Activated T-helper 1 cell treated with anti-CD3 and anti-CD28 coated beads, Interleukin-12 subunit alpha, Interleukin-12 subunit beta, Interleukin-2, Interleukin-4 antibody, amounts not matched to agents 30 ng/mL and 10 ng/mL and 1 ng/mL, durations not matched to agents 14 hours and 24 hours and 36 hours (primary cell): ENCODE measurements at regions of chr9 and their contacts with region 1.

Region 1: GRCh38 chr9:115204904-115205453 is 87.0 kb upstream of the TNC start:
- DNase-seq: no peak
- H3K4me3 Mint-ChIP-seq: no peak overlapping the region
- H3K27ac Mint-ChIP-seq: no peak overlapping the region
- H3K4me1 Mint-ChIP-seq: peaks cover 50% of the 10 kb centered on the region
- H3K27me3 Mint-ChIP-seq: peaks cover 13% of the 10 kb centered on the region

Region 2: GRCh38 chr9:114611516-114612271 is 593.3 kb before region 1 on chr9:
- intact Hi-C with region 1: loop called (anchors 1 kb)
- DNase-seq: no peak
- H3K4me3 Mint-ChIP-seq: peak overlapping the region; percentile 89
- H3K27ac Mint-ChIP-seq: peak overlapping the region; percentile 86
- H3K4me1 Mint-ChIP-seq: peaks cover 50% of the 10 kb centered on the region
- H3K27me3 Mint-ChIP-seq: peaks cover 2% of the 10 kb centered on the region

Region 3: DNA sequence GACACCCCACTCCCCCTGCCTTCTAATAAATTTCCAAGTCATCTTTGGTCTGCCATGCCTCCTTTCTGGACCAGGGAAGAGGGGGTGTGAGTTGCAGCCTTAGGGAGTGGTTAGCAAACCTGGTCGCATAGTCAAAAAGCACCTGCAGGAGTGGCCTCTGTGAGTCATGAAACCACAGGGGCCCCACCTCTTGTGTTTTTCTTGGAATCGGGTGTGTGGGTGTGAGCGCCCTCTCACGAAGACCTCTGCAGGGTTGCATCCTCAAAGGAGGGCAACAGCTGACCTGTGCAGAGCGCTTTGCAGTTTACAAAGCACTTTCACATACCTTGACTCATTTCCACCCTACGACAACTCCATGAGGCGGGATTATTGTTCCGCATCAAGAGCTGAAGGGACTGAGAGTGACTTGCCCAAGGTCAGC is 486.2 kb before region 1 on chr9:
- intact Hi-C with region 1: loop called (anchors 5 kb)
- DNase-seq: peak; percentile 94
- H3K4me3 Mint-ChIP-seq: peak overlapping the region; percentile 28
- H3K27ac Mint-ChIP-seq: peak overlapping the region; percentile 98
- H3K4me1 Mint-ChIP-seq: peaks cover 82% of the 10 kb centered on the region
- H3K27me3 Mint-ChIP-seq: peaks cover 2% of the 10 kb centered on the region

Region 4: GRCh38 chr9:114805670-114806525 is 399.1 kb before region 1 on chr9 and contains the start of gene TNFSF15:
- intact Hi-C with region 1: loop called (anchors 10 kb)
- DNase-seq: peak; percentile 22
- H3K4me3 Mint-ChIP-seq: peak within 1 kb of the TSS; percentile 74
- H3K27ac Mint-ChIP-seq: peak within 1 kb of the TSS; percentile 41
- H3K4me1 Mint-ChIP-seq: peaks cover 34% of the 10 kb centered on the region
- H3K27me3 Mint-ChIP-seq: no peaks in the 10 kb centered on the region
- total RNA-seq, gene TNFSF15: 1.4 and 1.5 TPM in 2 replicates

Region 5: DNA sequence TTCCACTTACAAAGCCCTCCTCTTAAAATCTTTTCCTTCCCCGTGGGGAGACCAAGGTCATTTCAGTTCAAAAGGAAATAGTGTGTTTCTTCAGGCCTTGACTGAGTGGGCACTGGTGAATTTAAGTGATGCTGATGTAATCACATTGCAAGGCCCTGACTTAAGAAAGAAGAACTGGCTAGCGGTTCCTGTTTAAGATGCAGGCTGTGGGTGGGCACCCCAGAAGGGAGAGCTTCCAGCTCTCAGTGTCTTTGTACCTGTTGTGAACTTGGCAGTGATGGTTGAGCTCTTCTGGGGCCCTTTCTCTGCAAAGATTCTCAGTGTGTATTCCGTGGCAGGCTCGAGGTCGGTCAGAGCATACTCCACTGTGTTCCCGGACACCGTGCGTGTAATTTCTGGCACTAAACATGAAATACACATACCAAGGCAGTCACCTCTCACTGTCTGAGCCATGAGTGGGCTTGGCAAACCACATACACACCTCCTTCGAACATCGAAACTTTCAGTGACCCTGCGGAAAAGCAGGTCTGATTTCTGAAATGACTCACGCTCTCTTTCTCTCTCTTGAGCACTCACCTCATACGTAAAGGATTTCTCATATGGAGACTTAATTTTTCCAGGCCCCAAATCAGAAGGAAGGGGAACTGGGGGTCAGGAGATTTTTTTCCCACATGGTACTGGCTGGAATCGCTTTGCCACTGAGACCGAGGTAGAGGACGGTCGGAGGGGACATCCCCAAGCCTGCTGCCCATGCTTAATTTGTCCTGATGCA is 169.0 kb before region 1 on chr9:
- intact Hi-C with region 1: loop called (anchors 1 kb)
- DNase-seq: no peak
- H3K4me3 Mint-ChIP-seq: peak overlapping the region; percentile 31
- H3K27ac Mint-ChIP-seq: peak overlapping the region; percentile 84
- H3K4me1 Mint-ChIP-seq: peaks cover 40% of the 10 kb centered on the region
- H3K27me3 Mint-ChIP-seq: peaks cover 5% of the 10 kb centered on the region

Region 6: DNA sequence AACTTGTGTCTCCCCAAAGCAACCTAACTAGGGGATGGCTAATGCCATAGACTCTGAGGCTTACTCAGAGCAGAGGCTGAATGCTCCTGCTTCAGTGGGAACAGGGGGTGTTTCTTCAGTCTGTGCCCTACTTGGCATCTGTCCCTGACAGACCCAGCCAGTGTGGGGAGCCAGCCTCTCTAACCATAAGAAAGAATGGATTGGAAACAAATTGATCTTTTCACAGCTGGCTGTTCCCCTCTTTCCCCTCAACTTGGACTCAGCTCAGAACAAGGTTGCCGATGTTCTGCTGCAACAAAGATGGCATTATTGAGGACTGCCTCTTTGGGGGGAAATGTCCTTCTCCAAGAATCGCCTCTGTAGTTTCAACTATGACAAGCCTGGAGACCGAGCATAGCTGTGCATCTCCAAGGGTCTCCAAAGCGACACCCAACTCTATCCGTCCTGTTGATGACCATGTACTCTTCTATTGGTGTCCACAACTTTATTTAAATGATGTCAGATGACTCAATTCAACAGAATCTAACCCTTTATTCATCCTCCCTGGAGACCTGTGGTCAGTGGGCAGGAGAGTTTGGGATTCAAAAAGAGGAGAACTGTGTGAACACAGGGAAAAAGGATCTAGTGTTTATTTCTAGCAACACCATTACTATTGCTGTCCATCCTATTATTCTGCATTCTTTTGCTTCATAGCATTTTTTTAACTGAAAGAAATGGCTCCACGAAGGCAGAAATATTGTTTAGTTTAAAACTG is 62.3 kb before region 1 on chr9:
- intact Hi-C with region 1: loop called (anchors 2 kb)
- DNase-seq: no peak
- H3K4me3 Mint-ChIP-seq: peak overlapping the region; percentile 26
- H3K27ac Mint-ChIP-seq: peak overlapping the region; percentile 11
- H3K4me1 Mint-ChIP-seq: peaks cover 36% of the 10 kb centered on the region
- H3K27me3 Mint-ChIP-seq: peaks cover 16% of the 10 kb centered on the region

Region 7: DNA sequence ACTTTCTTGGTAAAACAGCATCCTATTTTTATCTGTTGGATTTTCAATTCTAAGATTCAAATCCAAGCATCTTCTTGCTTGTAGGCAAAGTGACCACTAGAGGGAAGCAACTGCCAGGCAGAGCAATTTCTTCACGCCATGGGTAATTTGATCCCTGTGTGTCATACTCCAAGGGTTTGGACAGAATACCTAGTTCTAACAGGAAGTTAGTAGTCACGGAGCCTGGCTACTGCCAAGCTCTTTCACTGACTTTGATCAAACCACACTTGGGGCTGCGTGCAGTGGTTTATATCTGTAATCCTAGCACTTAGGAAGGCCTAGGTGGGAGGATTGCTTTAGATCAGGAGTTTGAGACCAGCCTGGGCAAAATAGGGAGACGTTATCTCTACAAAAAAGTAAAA is 386.6 kb after region 1 on chr9:
- intact Hi-C with region 1: no loop called
- DNase-seq: no peak
- H3K4me3 Mint-ChIP-seq: no peak overlapping the region
- H3K27ac Mint-ChIP-seq: no peak overlapping the region
- H3K4me1 Mint-ChIP-seq: no peaks in the 10 kb centered on the region
- H3K27me3 Mint-ChIP-seq: peaks cover 8% of the 10 kb centered on the region

Region 8: DNA sequence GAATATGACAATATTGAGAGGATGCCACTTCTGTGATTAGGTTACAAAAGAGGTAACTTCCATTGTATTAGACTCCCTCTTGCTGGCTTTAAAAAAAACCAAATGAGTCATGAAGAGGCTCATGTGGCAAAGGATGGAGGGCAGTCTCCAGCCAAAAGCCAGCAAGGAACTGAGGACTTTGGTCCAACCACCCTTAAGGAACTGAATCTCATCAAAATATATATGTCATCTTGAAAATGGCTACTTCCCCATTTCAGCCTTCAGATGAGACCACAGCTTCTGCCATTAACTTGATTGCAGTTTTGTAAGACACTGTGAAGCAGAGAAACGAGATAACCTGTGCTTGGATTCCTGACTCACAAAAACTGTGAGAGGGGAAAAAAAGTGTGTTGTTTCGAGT is 1466.6 kb after region 1 on chr9:
- intact Hi-C with region 1: no loop called
- DNase-seq: no peak
- H3K4me3 Mint-ChIP-seq: no peak overlapping the region
- H3K27ac Mint-ChIP-seq: no peak overlapping the region
- H3K4me1 Mint-ChIP-seq: no peaks in the 10 kb centered on the region
- H3K27me3 Mint-ChIP-seq: no peaks in the 10 kb centered on the region